Caco-2 (cell line): ENCODE measurements at regions of chr17 and their contacts with region 1.

Region 1: GRCh38 chr17:8118769-8119580 is 661 bp upstream of the ALOXE3 start:
- DNase-seq: peak; percentile 83 to 84
- H3K4me3 ChIP-seq: peak overlapping the region; percentile 63
- H3K4me3 Mint-ChIP-seq: peak overlapping the region; percentile 87
- H3K27ac Mint-ChIP-seq: peak overlapping the region; percentile 92
- H3K4me1 ChIP-seq: no peaks in the 10 kb centered on the region; the same call in 1 of the 2 replicates
- H3K4me1 Mint-ChIP-seq: peaks cover 17% of the 10 kb centered on the region
- H3K27me3 ChIP-seq: no peaks in the 10 kb centered on the region; the same call in 1 of the 2 replicates
- H3K27me3 Mint-ChIP-seq: peaks cover 6% of the 10 kb centered on the region
- CTCF ChIP-seq: peak; percentile 57 to 68

Region 2: DNA sequence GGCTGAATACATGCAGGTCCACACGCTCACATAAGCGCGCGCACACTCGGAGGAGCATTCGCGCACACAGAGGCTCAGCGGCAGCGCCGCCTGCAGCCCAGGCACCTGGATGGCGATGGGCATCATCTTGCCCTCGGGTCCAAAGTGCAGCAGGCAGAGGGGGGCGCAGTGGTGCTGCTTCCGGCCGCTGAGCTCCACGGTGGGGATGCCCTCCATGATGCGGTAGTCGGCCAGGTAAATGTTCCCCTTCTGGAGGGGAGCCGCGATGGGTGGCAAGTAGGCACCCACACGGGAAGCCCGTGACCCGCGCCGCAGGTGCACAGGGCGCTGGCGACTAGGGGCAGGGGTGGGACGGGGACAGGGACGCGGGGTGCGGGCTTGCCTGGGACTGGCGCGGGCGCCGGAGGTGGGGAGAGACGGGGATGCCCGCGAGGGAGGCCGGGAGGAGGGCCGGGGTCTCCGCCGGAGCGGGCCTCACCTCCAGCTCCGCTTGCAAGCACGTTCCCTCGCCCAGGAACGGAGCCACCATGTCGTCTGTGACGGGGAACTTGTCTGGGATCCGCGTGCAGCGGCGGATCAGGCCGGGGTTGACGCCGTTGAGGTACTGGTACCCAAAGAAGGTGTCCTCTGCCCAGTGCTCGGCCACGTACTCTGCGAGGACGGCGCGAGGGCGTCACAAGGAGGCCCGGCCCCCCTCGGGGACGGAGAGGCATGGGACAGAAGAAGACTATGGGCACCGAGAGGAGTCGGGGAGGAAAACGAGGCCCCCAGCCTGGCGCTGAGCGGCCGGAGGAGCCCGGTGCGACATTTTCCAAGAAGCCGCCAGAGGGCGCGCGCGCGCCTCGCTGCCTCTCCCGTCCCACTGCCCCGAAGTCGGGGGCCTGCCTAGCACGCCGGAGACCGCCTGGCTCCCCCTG is 39.4 kb before region 1 on chr17:
- CTCF ChIA-PET with region 1: interaction called, 8 read pairs
- POLR2A ChIA-PET with region 1: no interaction called
- intact Hi-C with region 1: loop called (anchors 5 kb)
- DNase-seq: peak; percentile 48 to 73
- H3K4me3 ChIP-seq: peak overlapping the region; percentile 50
- H3K4me3 Mint-ChIP-seq: peak overlapping the region; percentile 73
- H3K27ac Mint-ChIP-seq: no peak overlapping the region
- H3K4me1 ChIP-seq: no peaks in the 10 kb centered on the region
- H3K4me1 Mint-ChIP-seq: no peaks in the 10 kb centered on the region
- H3K27me3 ChIP-seq: no peaks in the 10 kb centered on the region
- H3K27me3 Mint-ChIP-seq: peaks cover 7% of the 10 kb centered on the region
- CTCF ChIP-seq: peak; percentile 66 to 81

Region 3: GRCh38 chr17:8105957-8106398 is 13.0 kb before region 1 on chr17:
- CTCF ChIA-PET with region 1: no interaction called
- POLR2A ChIA-PET with region 1: no interaction called
- intact Hi-C with region 1: no loop called
- DNase-seq: no peak
- H3K4me3 ChIP-seq: no peak overlapping the region
- H3K4me3 Mint-ChIP-seq: no peak overlapping the region
- H3K27ac Mint-ChIP-seq: peak overlapping the region; percentile 76
- H3K4me1 ChIP-seq: no peaks in the 10 kb centered on the region
- H3K4me1 Mint-ChIP-seq: peaks cover 6% of the 10 kb centered on the region
- H3K27me3 ChIP-seq: no peaks in the 10 kb centered on the region
- H3K27me3 Mint-ChIP-seq: no peaks in the 10 kb centered on the region
- CTCF ChIP-seq: no peak